AG04449 (cell line): ENCODE measurements at regions of chr18 and their contacts with region 1.

Region 1: DNA sequence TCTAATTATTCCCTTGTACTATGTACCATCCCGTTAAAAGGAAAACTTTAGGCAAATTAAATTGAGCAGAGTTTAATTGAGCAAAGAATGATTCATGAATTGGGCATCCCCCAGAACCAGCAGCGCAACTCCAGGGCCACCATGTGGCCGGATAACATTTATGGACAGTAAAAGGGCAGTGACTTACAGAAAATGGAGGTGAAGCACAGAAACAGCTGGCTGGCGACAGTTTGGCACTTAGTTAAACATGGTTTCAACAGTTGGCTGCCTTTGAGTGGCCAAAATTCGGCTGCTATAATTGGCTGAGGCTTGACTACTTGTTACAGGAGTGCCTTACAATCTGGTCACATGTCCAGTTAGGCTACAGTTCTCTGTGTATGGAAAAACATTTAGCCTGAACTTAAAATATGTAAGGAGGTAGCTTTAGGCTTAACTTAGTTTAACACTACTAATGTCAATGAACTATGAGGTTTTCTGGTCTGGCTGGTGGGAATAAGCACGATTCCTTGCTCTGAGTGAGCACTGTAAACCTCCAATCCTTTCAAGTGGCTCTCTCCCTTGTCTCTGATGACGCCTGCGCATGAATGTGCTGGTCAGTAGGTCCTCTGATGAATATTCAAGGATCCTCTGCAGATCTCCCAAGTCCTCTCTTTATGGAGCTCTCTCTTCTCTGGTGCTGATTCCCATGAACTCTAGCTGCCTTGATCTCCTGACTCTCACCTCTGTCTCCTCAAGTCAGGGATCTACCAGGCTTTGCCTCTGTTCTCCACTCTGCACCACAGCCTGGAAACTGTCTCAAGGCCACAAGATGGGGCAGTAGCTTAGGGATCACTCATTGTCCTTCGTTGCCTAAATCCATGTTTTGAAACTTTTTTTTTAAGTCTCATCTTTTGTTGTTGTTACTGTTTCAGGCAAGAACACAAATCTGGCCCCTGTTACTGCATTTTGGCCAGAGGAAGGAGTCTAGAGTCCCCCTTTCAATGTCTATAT is 24.4 kb upstream of the RAB31 start:
- DNase-seq: no peak
- H3K4me3 ChIP-seq: no peak overlapping the region
- CTCF ChIP-seq: peak; percentile 68

Region 2: GRCh38 chr18:9771261-9771976 is 87.7 kb after region 1 on chr18:
- CTCF ChIA-PET with region 1: interaction called, 10 read pairs
- POLR2A ChIA-PET with region 1: no interaction called
- DNase-seq: no peak
- H3K4me3 ChIP-seq: no peak overlapping the region
- CTCF ChIP-seq: peak; percentile 98

Region 3: GRCh38 chr18:9943311-9943710 is 259.6 kb after region 1 on chr18:
- CTCF ChIA-PET with region 1: interaction called, 10 read pairs
- POLR2A ChIA-PET with region 1: no interaction called
- DNase-seq: no peak
- H3K4me3 ChIP-seq: no peak overlapping the region
- CTCF ChIP-seq: no peak

Region 4: DNA sequence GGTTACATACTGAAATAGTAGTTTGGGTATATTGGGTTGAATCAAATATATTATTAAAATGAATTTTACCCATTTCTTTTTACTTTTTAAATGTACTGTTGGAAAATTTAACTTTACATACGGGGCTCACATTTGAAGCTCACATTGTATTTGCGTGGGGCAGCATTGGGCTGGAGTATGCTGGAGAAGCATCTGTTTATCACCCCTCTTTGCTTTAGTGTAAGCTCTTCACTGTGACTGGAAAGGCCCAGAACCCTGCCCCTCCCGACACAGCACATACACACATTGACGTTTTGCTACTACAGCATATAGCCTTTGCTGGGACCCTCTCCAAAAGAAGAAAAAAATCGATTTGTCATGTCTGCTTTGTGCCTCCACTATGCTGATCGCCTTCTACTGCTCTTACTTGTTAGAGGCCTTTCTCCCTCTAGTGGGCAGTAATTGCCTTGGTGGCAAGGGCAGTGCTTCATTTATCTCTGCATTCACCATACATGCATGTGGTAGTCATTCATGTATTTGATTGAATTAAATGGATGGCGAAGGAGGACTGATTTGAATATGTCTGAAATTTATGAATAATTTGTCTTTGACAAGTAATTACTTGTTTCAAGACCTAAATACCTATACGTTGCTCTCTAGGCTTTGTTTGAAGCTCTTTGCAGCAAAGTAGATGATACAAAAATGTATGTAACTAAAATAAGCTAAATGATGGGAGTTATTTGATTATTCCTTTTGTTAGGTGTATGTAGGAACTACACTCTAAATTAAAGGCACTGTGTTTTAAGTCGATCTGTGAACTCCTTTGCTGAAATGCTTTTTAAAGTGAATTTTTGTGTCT is 267.5 kb after region 1 on chr18:
- CTCF ChIA-PET with region 1: interaction called, 59 read pairs
- POLR2A ChIA-PET with region 1: no interaction called
- DNase-seq: no peak
- H3K4me3 ChIP-seq: no peak overlapping the region
- CTCF ChIP-seq: peak; percentile 69